ENCODE measurements at regions of chr19 and their contacts with region 1.

Region 1: GRCh38 chr19:19459707-19460251 is 54.3 kb downstream of the GATAD2A start:
- DNase-seq: peak; percentile 85
- ATAC-seq: peak; percentile 67
- H3K4me3 Mint-ChIP-seq: peak overlapping the region; percentile 79
- H3K27ac Mint-ChIP-seq: peak overlapping the region; percentile 99
- H3K4me1 Mint-ChIP-seq: peaks cover 84% of the 10 kb centered on the region
- H3K27me3 Mint-ChIP-seq: no peaks in the 10 kb centered on the region

Region 2: GRCh38 chr19:19410275-19411192 is 49.2 kb before region 1 on chr19:
- CTCF ChIA-PET with region 1: interaction called, 3 read pairs
- POLR2A ChIA-PET with region 1: interaction called, 3 read pairs
- intact Hi-C with region 1: loop called (anchors 1 to 2 kb)
- DNase-seq: peak; percentile 68
- ATAC-seq: peak; percentile 77
- H3K4me3 Mint-ChIP-seq: no peak overlapping the region
- H3K27ac Mint-ChIP-seq: peak overlapping the region; percentile 55
- H3K4me1 Mint-ChIP-seq: peaks cover 70% of the 10 kb centered on the region
- H3K27me3 Mint-ChIP-seq: no peaks in the 10 kb centered on the region

Region 3: GRCh38 chr19:19444681-19445155 is 15.1 kb before region 1 on chr19:
- CTCF ChIA-PET with region 1: no interaction called
- POLR2A ChIA-PET with region 1: no interaction called
- intact Hi-C with region 1: loop called (anchors 1 kb)
- DNase-seq: peak; percentile 29
- ATAC-seq: peak; percentile 10
- H3K4me3 Mint-ChIP-seq: peak overlapping the region; percentile 7
- H3K27ac Mint-ChIP-seq: peak overlapping the region; percentile 85
- H3K4me1 Mint-ChIP-seq: peaks cover 73% of the 10 kb centered on the region
- H3K27me3 Mint-ChIP-seq: no peaks in the 10 kb centered on the region

Region 4: DNA sequence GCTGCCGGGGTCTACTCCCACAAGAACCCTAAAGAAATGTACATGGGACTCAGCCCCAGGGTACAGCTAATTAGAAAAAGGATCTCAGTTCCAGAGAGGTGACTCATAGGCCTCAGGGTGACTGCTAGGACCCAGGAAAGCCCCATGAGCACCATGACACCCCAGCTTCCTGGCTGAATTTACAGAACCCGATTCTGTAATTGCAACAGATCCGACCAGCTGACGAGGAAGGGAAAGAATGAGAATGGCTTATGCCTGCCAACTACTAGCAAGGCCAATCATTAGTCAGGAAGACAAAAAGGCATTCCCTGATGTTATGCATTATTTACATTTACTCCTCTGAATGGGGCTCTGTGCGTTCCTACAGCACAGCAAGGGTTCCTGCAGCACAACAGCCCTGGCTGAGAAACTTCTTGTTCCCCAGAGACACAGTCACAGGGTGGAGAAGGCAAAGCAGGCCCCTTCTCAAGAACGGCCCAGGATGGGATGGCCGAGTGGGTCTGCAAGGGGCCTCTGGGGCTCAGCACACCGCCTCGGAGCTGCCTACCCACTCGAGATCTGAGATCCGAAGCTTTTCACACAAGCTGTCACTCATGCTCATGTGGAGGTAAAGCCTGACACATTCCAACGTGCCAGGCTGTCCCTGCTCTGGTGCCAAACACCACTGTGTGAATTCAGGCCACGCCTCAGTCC is 131.5 kb after region 1 on chr19:
- CTCF ChIA-PET with region 1: no interaction called
- POLR2A ChIA-PET with region 1: no interaction called
- intact Hi-C with region 1: loop called in 1 of 2 experiments (anchors 10 kb)
- DNase-seq: peak; percentile 85
- ATAC-seq: peak; percentile 91
- H3K4me3 Mint-ChIP-seq: peak overlapping the region; percentile 27
- H3K27ac Mint-ChIP-seq: peak overlapping the region; percentile 82
- H3K4me1 Mint-ChIP-seq: peaks cover 66% of the 10 kb centered on the region
- H3K27me3 Mint-ChIP-seq: no peaks in the 10 kb centered on the region

Region 5: DNA sequence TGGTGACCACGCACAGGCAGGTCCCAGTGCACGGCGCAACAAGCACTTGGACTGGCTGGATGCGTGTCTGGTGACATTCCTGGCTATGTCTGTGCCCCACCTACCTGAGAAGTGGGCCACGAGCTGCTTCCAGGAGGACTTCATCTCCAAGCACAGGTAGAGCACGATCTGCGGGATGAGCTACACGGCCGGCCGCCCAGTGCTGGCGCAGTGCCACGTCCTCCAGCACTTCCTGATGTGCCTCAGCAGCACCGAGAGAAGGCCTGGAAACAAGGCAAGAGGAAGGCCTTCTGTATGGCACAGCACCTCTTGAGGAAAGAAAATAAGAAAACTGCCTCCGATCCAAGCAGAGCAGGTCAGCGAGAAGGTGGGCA is 291.6 kb after region 1 on chr19:
- CTCF ChIA-PET with region 1: no interaction called
- POLR2A ChIA-PET with region 1: no interaction called
- intact Hi-C with region 1: no loop called
- DNase-seq: no peak
- ATAC-seq: no peak
- H3K4me3 Mint-ChIP-seq: no peak overlapping the region
- H3K27ac Mint-ChIP-seq: no peak overlapping the region
- H3K4me1 Mint-ChIP-seq: no peaks in the 10 kb centered on the region
- H3K27me3 Mint-ChIP-seq: no peaks in the 10 kb centered on the region

Region 6: DNA sequence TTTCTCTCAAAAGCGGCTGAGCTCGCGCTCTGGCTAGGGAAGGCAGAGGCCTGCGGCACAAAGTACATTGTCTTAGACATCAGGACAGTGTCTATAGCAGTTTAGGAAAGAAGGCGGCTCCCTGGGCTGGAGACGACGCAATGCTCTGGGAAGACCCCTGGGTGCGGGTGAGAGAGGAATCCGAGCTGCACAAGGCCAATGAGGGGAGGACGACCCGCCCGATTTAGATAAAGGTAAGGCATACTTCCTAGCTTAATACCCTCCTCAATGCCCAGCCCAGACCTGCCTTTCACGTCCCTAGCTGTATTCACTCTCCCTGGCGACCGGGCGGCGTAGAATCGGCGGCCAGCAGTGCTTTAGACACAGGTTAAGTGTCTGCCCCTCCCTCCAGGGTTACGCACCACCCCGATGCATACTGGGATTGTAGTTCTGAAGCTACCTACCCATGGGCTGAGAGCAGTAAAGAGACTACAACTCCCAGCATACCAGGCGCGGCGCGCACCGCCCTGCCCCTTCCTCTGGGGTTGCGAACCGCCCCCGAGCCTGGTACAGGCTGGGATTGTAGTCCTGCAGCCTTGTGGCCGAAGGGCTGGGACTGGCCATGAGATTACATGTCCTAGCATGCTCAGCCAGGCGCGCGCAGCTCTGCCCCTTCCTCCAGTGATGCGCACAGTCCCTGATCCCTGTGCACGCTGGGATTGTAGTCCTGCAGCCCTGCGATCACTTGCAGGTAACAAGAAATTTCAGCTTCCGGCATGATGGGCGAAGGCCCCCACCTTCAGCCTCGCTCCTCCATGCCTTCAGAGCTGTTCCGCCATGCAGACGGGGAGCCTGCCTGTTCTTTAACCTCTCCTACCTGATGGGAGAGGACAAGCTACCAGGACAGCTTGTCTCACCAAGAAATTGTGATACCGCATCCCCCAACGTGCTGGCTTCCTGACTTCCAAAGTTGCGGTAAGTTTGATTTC is 316.5 kb after region 1 on chr19:
- CTCF ChIA-PET with region 1: no interaction called
- POLR2A ChIA-PET with region 1: no interaction called
- intact Hi-C with region 1: no loop called
- DNase-seq: peak; percentile 96
- ATAC-seq: peak; percentile 99
- H3K4me3 Mint-ChIP-seq: peak overlapping the region; percentile 98
- H3K27ac Mint-ChIP-seq: peak overlapping the region; percentile 85
- H3K4me1 Mint-ChIP-seq: peaks cover 37% of the 10 kb centered on the region
- H3K27me3 Mint-ChIP-seq: no peaks in the 10 kb centered on the region